Pancreas (tissue), 10 donors: ENCODE measurements at regions of chr6 and their contacts with region 1.

Region 1: DNA sequence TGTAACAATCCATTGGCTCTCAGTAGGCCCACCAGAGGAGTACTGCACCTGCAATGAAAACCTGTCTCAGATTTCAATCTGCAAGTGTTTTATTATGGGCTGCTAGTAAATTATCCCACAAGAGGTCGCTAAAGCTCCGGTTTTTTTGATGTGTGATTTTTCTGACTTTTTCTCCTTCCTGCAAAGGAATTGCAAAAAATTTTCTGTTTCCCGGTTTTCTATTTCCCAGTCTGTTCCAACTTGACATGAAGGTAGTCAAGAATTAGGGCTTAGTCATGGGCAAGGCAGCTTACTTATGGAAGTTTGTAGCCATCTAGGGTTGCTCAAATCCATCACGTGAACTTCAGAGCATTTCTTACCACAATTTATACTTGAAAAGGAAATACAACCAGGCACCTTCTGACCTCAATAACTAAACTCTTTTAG is 38.5 kb upstream of the AHI1 start:
- DNase-seq: peak in 1 of 6 donors; percentile 17
- ATAC-seq: peak; percentile 55 to 65 (median 60)
- H3K4me3 ChIP-seq: no peak overlapping the region
- H3K27ac ChIP-seq: no peak overlapping the region
- H3K4me1 ChIP-seq: peaks cover 0 to 6% (median 0%) of the 10 kb centered on the region in 3 donors
- H3K27me3 ChIP-seq: no peaks in the 10 kb centered on the region
- CTCF ChIP-seq: peak; percentile 34 to 57 (median 45)

Region 2: DNA sequence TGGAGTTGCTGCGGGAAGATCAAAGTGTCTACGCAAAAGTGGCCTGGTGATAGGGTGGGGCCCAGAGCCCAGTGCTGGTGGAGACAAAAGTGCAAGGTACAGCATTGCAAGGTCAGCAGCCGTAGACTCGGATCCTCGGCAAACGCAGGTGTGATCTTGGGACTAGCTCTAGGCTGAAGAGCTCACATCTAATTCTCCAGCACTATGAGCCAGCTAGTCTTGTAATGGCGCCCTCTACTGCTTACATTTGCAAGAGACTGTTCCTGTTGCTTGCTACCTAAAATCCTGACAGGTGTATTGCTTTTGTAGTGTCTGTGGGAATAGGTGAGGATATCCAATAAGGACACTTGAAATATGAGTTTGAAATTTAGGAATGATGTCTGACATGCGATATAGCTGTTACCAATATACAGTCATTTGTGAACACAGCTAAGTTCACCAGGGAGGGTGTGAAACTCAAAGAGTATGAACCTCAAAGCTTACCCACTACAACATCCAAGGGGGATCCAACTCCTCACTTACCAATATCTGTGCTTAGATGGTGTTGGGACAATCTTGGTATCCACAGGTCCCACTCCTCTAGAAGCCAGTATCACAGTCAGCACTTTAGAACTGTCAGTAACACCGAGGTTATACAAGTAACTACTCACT is 373.9 kb after region 1 on chr6:
- intact Hi-C with region 1: loop called in 1 of 3 experiments (anchors 10 kb)
- DNase-seq: peak in 4 of 6 donors; percentile 30 to 63 (median 42)
- ATAC-seq: peak; percentile 79 to 92 (median 88)
- H3K4me3 ChIP-seq: no peak overlapping the region
- H3K27ac ChIP-seq: no peak overlapping the region
- H3K4me1 ChIP-seq: no peaks in the 10 kb centered on the region
- H3K27me3 ChIP-seq: no peaks in the 10 kb centered on the region
- CTCF ChIP-seq: peak; percentile 15 to 40 (median 35)

Region 3: GRCh38 chr6:136226027-136226673 is 690.1 kb after region 1 on chr6:
- intact Hi-C with region 1: loop called (anchors 5 to 10 kb)
- DNase-seq: peak in 4 of 6 donors; percentile 21 to 69 (median 49)
- ATAC-seq: peak; percentile 82 to 98 (median 96)
- H3K4me3 ChIP-seq: peak overlapping the region in 2 of 4 donors; percentile 17 to 27
- H3K27ac ChIP-seq: no peak overlapping the region
- H3K4me1 ChIP-seq: peaks cover 0 to 5% (median 0%) of the 10 kb centered on the region in 3 donors
- H3K27me3 ChIP-seq: no peaks in the 10 kb centered on the region
- CTCF ChIP-seq: peak; percentile 99 to 100 (median 99)

Region 4: GRCh38 chr6:136235217-136235532 is 699.2 kb after region 1 on chr6:
- intact Hi-C with region 1: loop called in 1 of 3 experiments (anchors 10 kb)
- DNase-seq: no peak
- ATAC-seq: no peak
- H3K4me3 ChIP-seq: no peak overlapping the region
- H3K27ac ChIP-seq: no peak overlapping the region
- H3K4me1 ChIP-seq: no peaks in the 10 kb centered on the region
- H3K27me3 ChIP-seq: no peaks in the 10 kb centered on the region
- CTCF ChIP-seq: no peak